ENCODE measurements at regions of chr11 and their contacts with region 1.

Region 1: GRCh38 chr11:111718436-111718835 is 47.8 kb downstream of the PPP2R1B start:
- DNase-seq: peak in 1 of 2 donors; percentile 70
- ATAC-seq: peak; percentile 93
- H3K4me3 ChIP-seq: peak overlapping the region in 2 of 4 donors; percentile 0 to 17
- H3K27ac ChIP-seq: peak overlapping the region; percentile 85 to 97 (median 88)
- H3K4me1 ChIP-seq: peaks cover 27 to 29% of the 10 kb centered on the region in 2 donors
- H3K27me3 ChIP-seq: no peaks in the 10 kb centered on the region
- CTCF ChIP-seq: no peak
- POLR2A ChIP-seq: peak; percentile 26 to 76

Region 2: GRCh38 chr11:111704421-111704820 is 14.0 kb before region 1 on chr11:
- in situ Hi-C with region 1: no loop called
- intact Hi-C with region 1: loop called (anchors 2 kb)
- DNase-seq: no peak
- ATAC-seq: no peak
- H3K4me3 ChIP-seq: no peak overlapping the region
- H3K27ac ChIP-seq: peak overlapping the region in 3 of 4 donors; percentile 33 to 50 (median 47)
- H3K4me1 ChIP-seq: peaks cover 26 to 29% of the 10 kb centered on the region in 2 donors
- H3K27me3 ChIP-seq: no peaks in the 10 kb centered on the region
- CTCF ChIP-seq: no peak
- POLR2A ChIP-seq: no peak

Measured in gastrocnemius medialis (tissue), 4 donors.